Activated CD4-positive, alpha-beta memory T cell treated with anti-CD3 and anti-CD28 coated beads for 36 hours (primary cell): ENCODE measurements at regions of chr3 and their contacts with region 1.

Region 1: DNA sequence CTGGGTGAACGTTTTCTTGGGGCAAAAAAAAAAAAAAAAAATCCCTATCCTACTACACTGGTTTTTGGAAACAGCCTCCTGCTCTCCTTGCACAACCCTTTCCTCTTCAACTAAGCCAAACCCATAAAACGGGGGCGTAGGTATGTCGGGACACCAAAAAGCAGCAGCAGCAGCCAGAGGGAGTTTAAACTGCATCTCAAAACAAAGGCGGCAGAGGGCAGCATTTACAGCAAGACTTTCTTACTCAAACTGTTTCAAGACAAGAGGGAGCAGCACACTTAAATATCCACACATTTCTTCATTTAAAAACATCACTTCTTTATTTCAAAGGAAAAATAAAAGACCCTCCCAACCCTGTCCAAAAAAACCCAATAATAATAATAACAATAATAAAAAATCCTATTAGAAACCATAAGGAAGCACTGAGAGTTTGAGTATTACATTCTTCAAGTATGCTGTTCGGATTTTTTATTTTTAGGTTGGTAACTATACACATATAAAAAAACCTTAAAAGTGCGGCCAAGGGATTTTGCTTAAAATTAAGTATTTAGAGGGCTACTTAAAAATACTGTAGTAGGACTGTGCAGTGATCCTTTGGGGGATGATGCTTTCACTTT is 43.9 kb upstream of the PLXND1 start:
- DNase-seq: peak; percentile 75
- H3K4me3 Mint-ChIP-seq: no peak overlapping the region
- H3K27ac Mint-ChIP-seq: no peak overlapping the region
- H3K4me1 Mint-ChIP-seq: no peaks in the 10 kb centered on the region
- H3K27me3 Mint-ChIP-seq: no peaks in the 10 kb centered on the region

Region 2: DNA sequence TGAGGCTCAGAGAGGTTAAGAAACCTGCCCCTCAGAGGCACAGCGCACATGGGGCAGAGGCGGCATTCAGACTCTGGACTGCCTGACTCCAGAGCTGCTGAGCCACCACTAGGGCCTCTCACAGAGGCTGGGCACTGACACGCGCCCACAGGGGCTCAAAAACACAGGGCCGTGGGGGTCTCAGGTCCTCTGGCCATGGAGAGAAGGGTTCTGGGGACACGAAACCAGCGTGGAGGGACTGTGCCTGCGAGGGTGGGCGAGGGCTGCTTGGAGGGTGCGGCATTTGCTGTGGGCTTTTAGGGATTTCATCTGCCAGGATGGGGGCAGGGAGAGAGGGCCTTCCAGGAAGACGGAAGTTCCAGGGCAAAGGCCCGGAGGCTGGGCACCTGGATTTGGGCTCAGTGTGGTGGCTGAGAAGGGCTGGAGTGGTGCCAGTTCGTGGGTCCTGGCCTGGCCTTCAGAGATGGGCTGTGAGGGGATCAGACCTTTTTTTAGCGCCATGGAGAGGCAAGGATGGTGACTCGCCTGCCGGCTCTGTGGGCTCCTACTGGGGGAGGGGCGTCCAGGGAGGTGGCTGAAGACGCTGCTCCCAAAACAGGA is 291.5 kb before region 1 on chr3:
- CTCF ChIA-PET with region 1: no interaction called
- POLR2A ChIA-PET with region 1: no interaction called
- intact Hi-C with region 1: no loop called
- DNase-seq: no peak
- H3K4me3 Mint-ChIP-seq: no peak overlapping the region
- H3K27ac Mint-ChIP-seq: no peak overlapping the region
- H3K4me1 Mint-ChIP-seq: no peaks in the 10 kb centered on the region
- H3K27me3 Mint-ChIP-seq: no peaks in the 10 kb centered on the region

Region 3: DNA sequence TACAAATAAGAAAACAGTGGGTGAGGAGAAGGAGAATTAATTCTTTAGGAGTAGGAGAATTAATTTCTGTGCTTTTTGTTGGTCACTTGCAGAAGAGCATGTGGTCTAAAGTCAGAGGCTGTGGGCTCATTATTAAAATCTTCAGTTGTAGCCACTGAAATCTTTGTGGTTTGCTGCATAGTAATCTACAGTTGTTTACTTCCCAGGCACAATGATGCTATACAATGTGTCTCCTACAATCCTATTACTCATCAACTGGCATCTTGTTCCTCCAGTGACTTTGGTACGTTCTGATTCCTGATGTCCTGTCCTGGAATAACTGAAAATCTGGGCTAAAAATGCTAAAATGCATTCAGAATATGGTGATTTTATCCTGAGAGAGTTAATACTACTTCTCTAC is 189.3 kb before region 1 on chr3:
- CTCF ChIA-PET with region 1: no interaction called
- POLR2A ChIA-PET with region 1: no interaction called
- intact Hi-C with region 1: no loop called
- DNase-seq: no peak
- H3K4me3 Mint-ChIP-seq: no peak overlapping the region
- H3K27ac Mint-ChIP-seq: no peak overlapping the region
- H3K4me1 Mint-ChIP-seq: no peaks in the 10 kb centered on the region
- H3K27me3 Mint-ChIP-seq: no peaks in the 10 kb centered on the region

Region 4: GRCh38 chr3:129934234-129935123 is 284.1 kb after region 1 on chr3:
- CTCF ChIA-PET with region 1: interaction called, 16 read pairs
- POLR2A ChIA-PET with region 1: no interaction called
- intact Hi-C with region 1: loop called (anchors 1 kb)
- DNase-seq: peak; percentile 31
- H3K4me3 Mint-ChIP-seq: no peak overlapping the region
- H3K27ac Mint-ChIP-seq: no peak overlapping the region
- H3K4me1 Mint-ChIP-seq: peaks cover 6% of the 10 kb centered on the region
- H3K27me3 Mint-ChIP-seq: peaks cover 4% of the 10 kb centered on the region